Activated T-helper 1 cell treated with anti-CD3 and anti-CD28 coated beads, Interleukin-12 subunit alpha, Interleukin-12 subunit beta, Interleukin-2, Interleukin-4 antibody, amounts not matched to agents 30 ng/mL and 10 ng/mL and 1 ng/mL, durations not matched to agents 14 hours and 24 hours and 36 hours (primary cell): ENCODE measurements at regions of chr5 and their contacts with region 1.

Region 1: DNA sequence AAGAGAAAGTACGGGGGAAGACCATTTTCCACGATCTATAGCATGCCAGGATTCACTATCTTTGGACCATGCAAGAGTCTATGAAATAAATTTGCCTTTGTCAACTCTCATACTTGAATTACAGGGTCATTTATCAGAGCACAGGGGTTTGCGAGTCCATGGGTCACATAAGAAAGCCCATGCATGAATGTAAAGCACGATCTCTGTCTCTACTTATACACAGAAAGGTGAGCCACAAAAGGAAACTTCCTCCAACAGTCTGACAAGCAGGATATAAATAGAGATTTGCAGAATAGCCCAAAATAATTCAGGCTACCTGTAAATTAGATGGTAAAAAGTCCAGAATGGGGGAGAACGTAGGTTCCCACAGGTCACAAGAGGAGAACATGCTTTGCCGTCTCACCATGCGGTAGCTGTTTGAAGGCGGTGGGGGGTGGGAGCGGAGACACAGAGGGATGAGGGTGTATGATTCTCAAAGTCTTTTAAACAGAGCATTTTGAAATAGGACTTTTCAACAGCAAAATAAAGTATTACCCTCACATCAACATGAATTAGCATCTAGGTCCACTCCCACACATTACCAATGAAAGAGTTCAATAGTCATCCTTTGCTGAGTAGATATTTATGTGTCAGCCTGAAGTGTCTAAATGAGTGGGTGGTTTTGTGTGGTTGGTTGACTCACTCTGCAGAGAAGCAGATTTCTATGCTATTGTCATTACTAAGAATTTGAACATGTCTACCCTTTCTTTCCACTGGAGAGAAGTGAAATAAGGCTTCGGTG is 279.7 kb downstream of the EBF1 start:
- DNase-seq: no peak
- H3K4me3 Mint-ChIP-seq: no peak overlapping the region
- H3K27ac Mint-ChIP-seq: peak overlapping the region; percentile 80
- H3K4me1 Mint-ChIP-seq: peaks cover 55% of the 10 kb centered on the region
- H3K27me3 Mint-ChIP-seq: no peaks in the 10 kb centered on the region

Region 2: DNA sequence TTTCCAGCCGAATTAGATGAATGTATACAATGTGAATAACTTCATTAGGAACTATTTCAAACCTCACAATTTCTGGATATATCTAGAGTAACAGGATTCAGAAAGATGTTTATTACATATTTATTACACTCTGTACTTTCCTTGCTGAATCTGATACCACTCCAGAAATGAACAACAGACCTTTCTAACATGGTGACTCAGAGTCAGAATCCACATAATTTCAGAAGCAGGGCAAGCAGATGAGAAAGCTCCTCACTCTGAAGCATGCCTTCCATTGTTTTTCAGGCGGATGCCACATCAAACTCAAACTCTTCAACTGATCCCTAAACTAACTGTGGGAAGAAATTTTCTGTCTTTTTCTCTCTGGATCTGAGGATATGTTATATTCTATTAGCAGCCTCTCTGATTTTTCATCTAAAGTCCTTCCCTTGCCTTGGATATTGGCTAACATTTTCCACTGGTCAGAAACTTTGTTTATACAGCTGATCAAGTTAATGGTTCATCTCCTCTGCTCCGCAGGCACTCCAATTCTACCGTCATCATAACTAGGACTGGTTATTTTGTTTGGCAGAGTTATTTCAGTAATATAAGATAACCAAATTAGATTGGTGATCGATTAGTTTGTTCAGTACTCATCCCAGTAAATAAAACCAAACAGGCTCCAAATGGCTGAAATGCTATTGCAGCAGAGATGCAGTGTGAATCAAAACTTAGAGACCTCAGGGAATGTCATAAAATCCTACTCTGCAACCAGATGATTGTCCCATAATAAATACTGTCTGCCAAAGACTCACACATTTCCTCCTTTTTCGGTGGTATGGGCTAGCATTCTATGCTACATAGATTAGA is 276.3 kb before region 1 on chr5:
- intact Hi-C with region 1: loop called (anchors 2 kb)
- DNase-seq: no peak
- H3K4me3 Mint-ChIP-seq: no peak overlapping the region
- H3K27ac Mint-ChIP-seq: no peak overlapping the region
- H3K4me1 Mint-ChIP-seq: peaks cover 4% of the 10 kb centered on the region
- H3K27me3 Mint-ChIP-seq: peaks cover 2% of the 10 kb centered on the region

Region 3: DNA sequence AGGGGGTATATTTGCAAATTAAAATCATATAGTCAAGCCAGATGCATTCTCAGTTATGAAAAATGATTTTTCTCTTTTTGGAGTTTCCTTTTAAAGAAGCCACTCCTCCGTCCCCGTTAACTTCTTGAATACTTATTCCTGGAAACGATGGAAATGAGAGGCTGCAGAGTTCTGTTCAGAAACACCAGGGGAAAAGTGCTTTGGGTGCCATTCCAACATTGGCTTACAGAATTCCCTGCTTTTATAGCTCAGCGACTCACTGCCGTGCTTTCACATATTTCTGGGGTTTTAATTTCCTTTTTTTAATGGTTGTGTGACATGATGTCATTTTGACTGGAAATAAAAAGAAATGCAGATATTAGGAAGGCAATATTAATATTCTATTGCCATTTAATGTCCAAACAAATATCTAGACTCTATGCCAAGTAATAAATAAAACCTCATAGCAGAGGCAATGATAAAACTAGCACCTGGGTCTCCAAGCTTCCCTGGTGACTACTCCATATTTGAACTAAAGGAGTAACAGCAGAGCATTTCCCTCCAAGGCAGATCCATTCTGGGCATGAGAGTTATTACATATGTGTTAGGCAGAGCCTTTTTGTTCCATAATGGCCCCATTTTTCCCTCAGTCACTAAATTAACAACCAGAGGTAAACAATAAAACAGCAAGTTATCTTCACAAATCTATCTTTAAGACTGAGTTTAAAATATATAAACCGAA is 83.7 kb before region 1 on chr5:
- intact Hi-C with region 1: no loop called
- DNase-seq: no peak
- H3K4me3 Mint-ChIP-seq: no peak overlapping the region
- H3K27ac Mint-ChIP-seq: no peak overlapping the region
- H3K4me1 Mint-ChIP-seq: no peaks in the 10 kb centered on the region
- H3K27me3 Mint-ChIP-seq: peaks cover 13% of the 10 kb centered on the region

Region 4: DNA sequence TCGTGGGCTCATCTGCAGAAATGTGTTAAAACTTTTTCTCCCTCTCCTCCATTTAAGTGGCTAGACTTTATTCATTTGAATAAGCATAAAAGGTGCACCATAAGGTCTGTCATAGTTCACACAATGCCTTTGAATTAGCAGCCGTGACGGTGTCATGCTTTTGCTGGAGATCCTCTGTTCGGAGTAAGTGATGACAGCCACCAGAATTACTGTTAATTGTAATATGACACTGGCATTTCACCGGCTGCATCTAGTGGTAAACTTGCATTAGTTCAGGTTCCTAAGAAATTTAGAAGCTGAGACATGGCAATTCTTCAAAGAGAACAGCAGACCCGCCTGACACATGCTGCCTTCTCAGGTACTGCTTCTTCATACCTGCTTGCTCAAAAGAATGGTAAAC is 37.9 kb after region 1 on chr5:
- intact Hi-C with region 1: loop called (anchors 2 kb)
- DNase-seq: no peak
- H3K4me3 Mint-ChIP-seq: no peak overlapping the region
- H3K27ac Mint-ChIP-seq: no peak overlapping the region
- H3K4me1 Mint-ChIP-seq: peaks cover 13% of the 10 kb centered on the region
- H3K27me3 Mint-ChIP-seq: peaks cover 10% of the 10 kb centered on the region

Region 5: DNA sequence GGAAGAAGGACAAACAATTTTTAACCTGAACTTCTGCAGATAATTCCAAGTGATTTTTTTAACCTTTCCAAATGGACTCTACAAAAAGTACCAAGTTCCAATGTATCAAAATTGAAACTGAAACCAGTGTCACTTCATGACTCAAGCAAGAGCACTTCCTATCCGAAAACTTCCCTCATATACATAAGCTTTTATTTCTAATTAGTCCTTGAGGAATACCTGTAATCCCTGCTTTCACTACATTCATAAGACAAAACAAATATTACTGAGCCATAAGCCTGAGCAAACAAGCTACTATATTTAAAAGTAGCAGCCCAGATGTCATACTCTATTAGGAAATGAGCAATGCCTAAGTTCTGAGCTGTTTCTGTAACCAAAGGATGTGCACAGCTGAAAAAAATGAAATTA is 55.2 kb after region 1 on chr5:
- intact Hi-C with region 1: loop called (anchors 1 kb)
- DNase-seq: no peak
- H3K4me3 Mint-ChIP-seq: peak overlapping the region; percentile 9
- H3K27ac Mint-ChIP-seq: peak overlapping the region; percentile 55
- H3K4me1 Mint-ChIP-seq: peaks cover 47% of the 10 kb centered on the region
- H3K27me3 Mint-ChIP-seq: peaks cover 4% of the 10 kb centered on the region

Region 6: GRCh38 chr5:159100025-159100781 is 280.2 kb after region 1 on chr5:
- intact Hi-C with region 1: loop called (anchors 1 kb)
- DNase-seq: peak; percentile 84
- H3K4me3 Mint-ChIP-seq: peak overlapping the region; percentile 86
- H3K27ac Mint-ChIP-seq: peak overlapping the region; percentile 51
- H3K4me1 Mint-ChIP-seq: peaks cover 34% of the 10 kb centered on the region
- H3K27me3 Mint-ChIP-seq: peaks cover 80% of the 10 kb centered on the region

Region 7: DNA sequence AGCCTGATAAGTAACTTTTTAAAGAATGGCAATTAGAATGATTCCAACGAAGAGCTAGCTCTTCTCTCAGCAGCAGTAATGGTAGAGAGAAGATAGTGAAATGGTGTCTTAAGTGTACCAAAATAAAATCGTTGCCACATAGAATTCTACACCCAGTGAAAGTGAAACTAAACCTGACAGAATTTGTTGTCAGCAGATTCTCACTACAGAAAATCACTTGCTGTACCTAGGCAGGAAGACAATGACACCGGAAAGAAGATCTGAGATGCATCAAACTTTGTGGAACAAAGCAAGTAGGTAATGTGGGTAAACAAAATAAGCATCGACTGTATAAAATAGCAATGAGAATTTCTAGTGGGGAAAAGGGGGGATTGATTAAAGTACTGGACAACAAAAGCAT is 300.4 kb after region 1 on chr5:
- intact Hi-C with region 1: loop called (anchors 2 kb)
- DNase-seq: no peak
- H3K4me3 Mint-ChIP-seq: peak overlapping the region; percentile 43
- H3K27ac Mint-ChIP-seq: peak overlapping the region; percentile 86
- H3K4me1 Mint-ChIP-seq: peaks cover 18% of the 10 kb centered on the region
- H3K27me3 Mint-ChIP-seq: peaks cover 10% of the 10 kb centered on the region